Activated CD4-positive, alpha-beta T cell treated with anti-CD3 and anti-CD28 coated beads, Interleukin-2, amount 10 ng/mL, durations not matched to agents 24 days and 14 days (primary cell): ENCODE measurements at regions of chr3 and their contacts with region 1.

Region 1: DNA sequence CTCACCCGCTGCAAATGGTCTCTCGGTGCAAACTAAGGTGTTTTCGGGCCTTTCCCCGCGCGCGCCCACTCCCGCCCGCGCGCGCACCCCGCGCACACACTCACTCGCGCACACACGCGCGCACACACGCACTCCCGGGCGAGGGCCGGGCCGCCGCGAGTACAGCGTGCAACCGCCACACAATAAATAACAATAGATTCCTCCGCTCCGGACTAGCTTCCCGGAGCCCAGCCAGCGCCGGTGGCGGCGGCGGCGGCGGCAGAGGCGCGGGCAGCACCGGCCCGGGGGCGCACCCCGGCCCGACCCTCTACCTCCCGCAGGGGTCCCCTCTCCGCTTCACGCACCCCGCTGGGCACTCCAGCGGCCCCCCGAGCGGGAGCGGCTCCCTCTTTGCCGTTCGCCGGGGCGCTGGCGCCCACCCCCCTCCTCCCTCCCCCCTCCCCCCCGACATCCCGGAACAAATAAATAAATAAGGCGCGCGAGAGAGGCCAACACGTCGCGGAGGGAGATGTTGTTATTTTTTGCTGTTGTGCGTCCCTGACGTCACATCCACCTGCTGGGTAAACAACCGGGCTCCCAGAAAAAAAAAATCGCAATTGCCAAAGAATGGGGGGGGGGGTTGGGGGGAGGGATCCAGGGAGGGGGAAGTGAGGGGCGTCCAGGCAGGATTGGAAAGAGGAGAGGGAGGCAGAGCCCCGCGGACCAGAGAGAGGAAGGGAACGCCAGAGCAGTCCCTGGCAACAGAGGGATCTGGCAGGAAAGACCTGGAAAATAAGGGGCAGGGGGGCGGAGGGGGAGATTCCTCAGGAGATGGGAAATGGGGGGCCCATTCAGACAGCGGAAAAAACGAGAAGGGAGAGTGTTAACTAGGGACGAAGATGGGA is at the start of gene FOXP1:
- DNase-seq: peak; percentile 87
- H3K4me3 Mint-ChIP-seq: peak within 1 kb of the TSS; percentile 89
- H3K27ac Mint-ChIP-seq: peak within 1 kb of the TSS; percentile 95
- H3K4me1 Mint-ChIP-seq: peaks cover 38% of the 10 kb centered on the region
- H3K27me3 Mint-ChIP-seq: peaks cover 17% of the 10 kb centered on the region
- total RNA-seq, gene FOXP1: 102 and 110 TPM in 2 replicates

Region 2: DNA sequence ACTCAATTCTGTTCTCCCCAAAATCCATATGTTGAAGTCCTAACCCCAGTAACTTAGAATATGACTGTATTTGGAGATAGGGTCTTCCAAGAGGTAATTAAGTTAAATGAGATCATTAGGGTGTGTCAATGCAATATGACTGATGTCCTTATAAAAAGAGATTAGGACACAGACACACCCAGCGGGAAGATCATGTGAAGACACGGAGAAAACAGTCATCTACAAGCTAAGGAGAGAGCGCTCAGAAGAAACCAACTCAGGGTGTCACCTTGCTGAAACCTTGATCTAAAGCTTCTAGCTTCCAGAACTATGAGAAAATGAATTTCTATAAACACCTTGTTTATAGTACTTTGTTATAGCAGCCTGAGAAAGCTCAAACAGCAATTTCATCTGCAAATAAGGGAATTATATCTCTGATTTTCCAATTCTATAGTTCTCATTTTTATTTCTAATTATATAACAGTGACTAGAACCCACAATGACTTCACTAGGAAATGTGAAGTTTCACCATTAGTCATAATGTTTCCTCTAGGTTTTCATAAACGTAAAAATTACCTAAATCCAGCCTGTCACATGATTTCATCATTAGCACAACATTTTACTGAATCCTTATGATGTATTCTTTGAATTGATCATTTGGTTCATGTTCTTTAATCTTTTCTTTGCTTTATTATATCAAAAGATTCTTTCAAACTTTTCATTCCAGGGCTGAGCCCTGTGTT is 812.2 kb before region 1 on chr3:
- intact Hi-C with region 1: loop called (anchors 5 kb)
- DNase-seq: no peak
- H3K4me3 Mint-ChIP-seq: no peak overlapping the region
- H3K27ac Mint-ChIP-seq: no peak overlapping the region
- H3K4me1 Mint-ChIP-seq: no peaks in the 10 kb centered on the region
- H3K27me3 Mint-ChIP-seq: peaks cover 29% of the 10 kb centered on the region

Region 3: DNA sequence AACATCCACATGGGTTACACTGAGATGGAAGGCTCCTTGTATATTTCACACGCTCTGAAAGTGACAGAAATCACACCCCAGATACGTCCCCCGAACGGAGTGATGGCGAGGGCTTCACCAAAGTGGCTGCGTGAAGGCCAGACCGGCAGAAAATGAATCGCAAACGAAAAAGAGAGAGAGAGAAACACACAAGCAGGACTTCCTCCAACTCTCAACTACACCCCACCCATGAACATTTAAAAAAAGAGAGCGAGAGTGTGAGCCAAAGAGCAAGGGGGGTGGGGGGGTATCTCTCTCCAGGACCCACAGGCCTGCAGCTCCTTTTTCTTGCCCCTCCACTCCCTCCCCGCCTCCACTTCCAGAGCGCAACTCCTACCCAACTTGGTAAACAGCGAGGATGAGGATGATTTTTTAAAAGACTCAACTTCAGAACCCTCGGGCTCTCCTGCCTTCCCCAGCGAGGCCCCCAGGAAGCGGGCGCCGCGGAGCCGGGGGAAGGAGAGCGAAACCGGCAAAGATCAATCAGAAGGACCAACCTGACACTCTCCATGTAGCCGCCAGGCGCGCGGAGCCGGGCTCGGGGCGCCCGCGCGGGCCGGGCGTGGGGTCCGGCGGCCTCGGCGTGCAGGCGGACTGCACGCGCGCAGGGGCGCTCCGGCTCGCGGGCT is 519.4 kb before region 1 on chr3:
- intact Hi-C with region 1: loop called (anchors 2 kb)
- DNase-seq: peak; percentile 92
- H3K4me3 Mint-ChIP-seq: no peak overlapping the region
- H3K27ac Mint-ChIP-seq: no peak overlapping the region
- H3K4me1 Mint-ChIP-seq: peaks cover 55% of the 10 kb centered on the region
- H3K27me3 Mint-ChIP-seq: no peaks in the 10 kb centered on the region

Region 4: DNA sequence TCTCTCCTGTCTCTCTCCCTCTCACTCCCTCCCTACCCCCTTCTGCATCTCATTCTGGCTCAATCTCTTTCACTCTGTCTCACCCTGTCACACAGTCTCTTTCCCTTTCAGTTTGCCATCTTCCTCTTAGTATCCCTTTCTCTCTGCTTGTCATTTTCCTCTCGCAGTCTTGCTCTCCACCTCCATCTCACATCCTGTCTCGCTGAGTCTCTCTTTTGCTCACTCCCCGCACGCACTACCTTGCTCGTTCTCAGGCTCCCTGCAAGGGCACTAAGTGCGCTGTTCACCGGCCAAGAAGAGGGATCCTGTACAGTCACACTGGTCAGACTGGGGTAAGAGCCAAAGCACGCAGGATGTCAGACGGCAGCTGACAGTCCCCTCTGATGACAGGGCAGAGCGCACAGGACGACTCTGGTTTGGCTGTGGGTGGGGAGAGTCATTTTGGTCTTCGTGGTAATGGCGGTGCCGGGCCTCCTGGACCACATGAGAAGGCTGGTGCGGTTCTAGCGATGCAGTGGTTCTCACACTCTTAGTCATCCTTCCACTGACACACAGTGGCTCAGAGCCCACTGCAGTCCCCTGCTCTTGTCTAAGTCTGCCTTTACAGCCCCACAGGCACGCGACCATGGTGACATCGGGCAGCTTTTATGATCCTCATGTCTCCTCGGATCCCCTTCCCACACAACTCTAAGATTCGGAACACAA is 357.1 kb before region 1 on chr3:
- intact Hi-C with region 1: loop called (anchors 1 kb)
- DNase-seq: peak; percentile 94
- H3K4me3 Mint-ChIP-seq: peak overlapping the region; percentile 85
- H3K27ac Mint-ChIP-seq: peak overlapping the region; percentile 95
- H3K4me1 Mint-ChIP-seq: peaks cover 41% of the 10 kb centered on the region
- H3K27me3 Mint-ChIP-seq: peaks cover 35% of the 10 kb centered on the region

Region 5: GRCh38 chr3:71389911-71390573 is 193.8 kb before region 1 on chr3:
- intact Hi-C with region 1: loop called (anchors 5 kb)
- DNase-seq: peak; percentile 69
- H3K4me3 Mint-ChIP-seq: peak overlapping the region; percentile 46
- H3K27ac Mint-ChIP-seq: peak overlapping the region; percentile 62
- H3K4me1 Mint-ChIP-seq: peaks cover 34% of the 10 kb centered on the region
- H3K27me3 Mint-ChIP-seq: peaks cover 31% of the 10 kb centered on the region

Region 6: DNA sequence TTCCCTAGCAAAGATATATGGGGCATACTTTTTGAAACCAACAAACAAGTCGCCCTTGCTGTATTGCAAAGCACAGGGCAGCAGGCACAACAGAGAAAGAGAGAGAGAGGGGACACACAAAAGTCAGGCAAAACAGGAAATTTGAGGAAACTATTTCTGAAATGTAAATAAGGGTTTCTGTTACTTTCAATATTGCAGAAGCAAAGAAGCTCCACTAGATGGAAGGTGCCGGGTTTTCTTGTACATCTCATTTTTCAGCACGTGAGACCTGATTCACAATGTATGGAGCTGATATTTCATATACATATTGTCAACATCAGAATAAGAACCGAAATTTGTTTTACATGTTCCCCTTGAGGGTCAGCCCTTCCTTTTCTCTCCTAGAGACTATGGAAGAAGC is 127.7 kb before region 1 on chr3:
- intact Hi-C with region 1: loop called (anchors 2 kb)
- DNase-seq: peak; percentile 70
- H3K4me3 Mint-ChIP-seq: peak overlapping the region; percentile 53
- H3K27ac Mint-ChIP-seq: peak overlapping the region; percentile 60
- H3K4me1 Mint-ChIP-seq: peaks cover 59% of the 10 kb centered on the region
- H3K27me3 Mint-ChIP-seq: peaks cover 10% of the 10 kb centered on the region